Calu3 (cell line): ENCODE measurements at regions of chr19 and their contacts with region 1.

Region 1: GRCh38 chr19:56121180-56122167 is at the start of gene ZNF787:
- DNase-seq: peak; percentile 100
- H3K4me3 Mint-ChIP-seq: peak within 1 kb of the TSS; percentile 84
- H3K27ac Mint-ChIP-seq: peak within 1 kb of the TSS; percentile 85
- H3K4me1 Mint-ChIP-seq: peaks cover 12% of the 10 kb centered on the region
- H3K27me3 Mint-ChIP-seq: no peaks in the 10 kb centered on the region
- CTCF ChIP-seq: no peak
- total RNA-seq, gene ZNF787: 68.5 and 77.3 TPM in 2 replicates

Region 2: DNA sequence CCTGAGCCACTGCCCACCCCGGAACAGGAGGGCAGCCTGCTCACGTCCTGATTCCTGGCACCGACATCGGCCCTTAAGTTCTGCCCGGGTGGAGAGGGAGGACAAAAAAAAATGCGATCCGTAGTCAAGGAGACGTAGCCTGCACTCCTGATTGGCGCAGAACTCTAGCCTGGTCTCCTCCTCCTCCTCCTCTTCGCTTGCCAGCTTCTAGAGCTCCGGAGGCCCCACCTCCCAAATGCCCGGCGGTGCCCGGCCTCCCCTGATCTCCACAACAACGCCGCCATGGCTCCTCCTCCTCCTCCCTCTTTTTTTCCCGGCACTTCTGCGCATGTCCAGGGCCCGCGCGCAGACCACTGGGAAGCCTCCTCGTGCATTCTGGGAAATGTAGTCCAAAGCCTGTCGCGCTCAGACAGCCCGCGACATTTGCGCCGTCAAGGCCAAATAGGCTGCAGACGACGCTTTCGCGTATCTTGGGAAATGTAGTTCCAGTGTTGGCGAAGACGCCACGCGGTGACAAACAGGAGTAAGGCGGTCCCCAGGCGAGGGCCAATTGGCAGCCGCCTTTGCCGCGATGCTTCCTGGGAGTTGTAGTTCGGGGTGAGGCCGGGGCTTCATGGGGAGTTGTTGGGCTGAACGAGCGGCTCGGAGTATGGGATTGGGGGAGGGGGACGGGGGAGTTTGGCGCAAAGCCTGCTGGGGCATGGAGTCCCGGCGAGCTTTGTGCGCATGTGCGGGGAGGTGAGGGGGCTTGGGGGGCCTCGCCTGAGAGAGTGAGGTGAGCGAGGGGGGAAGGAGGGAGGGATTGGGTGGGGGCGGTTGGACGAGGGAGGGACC is 19.3 kb after region 1 on chr19 and contains the start of gene ZNF444:
- CTCF ChIA-PET with region 1: interaction called, 3 read pairs
- intact Hi-C with region 1: loop called (anchors 1 kb)
- DNase-seq: peak; percentile 99
- H3K4me3 Mint-ChIP-seq: peak within 1 kb of the TSS; percentile 67
- H3K27ac Mint-ChIP-seq: peak within 1 kb of the TSS; percentile 89
- H3K4me1 Mint-ChIP-seq: peaks cover 50% of the 10 kb centered on the region
- H3K27me3 Mint-ChIP-seq: no peaks in the 10 kb centered on the region
- CTCF ChIP-seq: no peak
- total RNA-seq, gene ZNF444: 78.6 and 79.1 TPM in 2 replicates